H1 (cell line): ENCODE measurements at regions of chr16 and their contacts with region 1.

Region 1: DNA sequence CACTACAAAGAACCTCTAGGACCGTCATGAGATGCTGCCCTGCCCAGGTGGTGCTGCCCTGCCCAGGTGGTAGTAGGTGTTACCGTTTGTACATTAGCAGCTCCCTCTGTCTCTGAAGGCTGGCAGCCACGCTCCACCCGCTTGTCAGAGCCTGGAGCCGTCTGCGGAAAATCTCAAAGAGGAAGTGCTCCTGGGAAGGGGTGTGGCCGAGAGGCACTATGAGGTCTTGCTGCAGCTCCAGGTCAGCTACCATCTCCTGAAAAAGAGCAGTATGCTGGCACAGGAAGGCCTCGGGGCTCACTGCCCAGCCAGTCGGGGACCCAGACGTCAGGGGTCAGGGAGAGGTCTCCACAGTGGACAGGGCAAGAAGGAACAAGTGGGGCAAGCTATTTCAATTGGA is 28.3 kb downstream of the ZNF276 start:
- DNase-seq: no peak
- H3K4me3 ChIP-seq: no peak overlapping the region
- H3K27ac ChIP-seq: no peak overlapping the region
- H3K4me1 ChIP-seq: no peaks in the 10 kb centered on the region
- H3K27me3 ChIP-seq: no peaks in the 10 kb centered on the region
- CTCF ChIP-seq: no peak
- EP300 ChIP-seq: no peak
- POLR2A ChIP-seq: no peak
- RAD21 ChIP-seq: no peak

Region 2: DNA sequence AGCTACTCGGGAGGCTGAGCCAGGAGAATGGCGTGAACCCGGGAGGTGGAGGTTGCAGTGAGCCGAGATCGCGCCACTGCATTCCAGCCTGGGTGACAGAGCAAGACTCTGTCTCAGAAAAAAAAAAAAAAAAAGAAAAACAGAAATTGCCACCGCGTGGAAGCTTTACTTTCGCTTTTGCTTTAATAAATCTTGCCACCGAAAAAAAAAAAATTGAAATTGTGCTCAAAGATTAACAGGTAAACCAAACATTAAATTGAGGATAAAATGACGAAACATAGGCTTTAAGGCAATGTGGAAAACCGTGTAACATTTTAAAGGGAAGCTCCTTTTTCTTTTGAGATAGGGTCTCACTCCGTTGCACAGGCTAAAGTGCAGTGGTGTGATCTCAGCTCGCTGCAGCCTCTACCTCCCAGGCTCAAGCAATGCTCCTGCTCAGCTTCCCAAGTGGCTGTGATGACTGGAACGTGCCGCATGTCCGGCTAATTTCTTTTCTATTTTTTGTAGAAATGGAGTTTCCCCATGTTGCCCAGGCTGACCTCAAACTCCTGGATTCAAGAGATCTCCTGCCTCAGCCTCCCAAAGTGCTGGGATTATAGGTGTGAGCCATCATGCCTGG is 11.8 kb after region 1 on chr16:
- CTCF ChIA-PET with region 1: interaction called, 14 read pairs
- POLR2A ChIA-PET with region 1: interaction called, 4 read pairs
- DNase-seq: no peak
- H3K4me3 ChIP-seq: no peak overlapping the region
- H3K27ac ChIP-seq: no peak overlapping the region
- H3K4me1 ChIP-seq: no peaks in the 10 kb centered on the region
- H3K27me3 ChIP-seq: no peaks in the 10 kb centered on the region
- CTCF ChIP-seq: no peak
- EP300 ChIP-seq: no peak
- POLR2A ChIP-seq: no peak
- RAD21 ChIP-seq: no peak